Caco-2 (cell line): ENCODE measurements at regions of chr20 and their contacts with region 1.

Region 1: GRCh38 chr20:57654363-57654997 is 34.3 kb upstream of the ZBP1 start:
- DNase-seq: peak; percentile 71 to 79
- H3K4me3 ChIP-seq: no peak overlapping the region
- H3K4me3 Mint-ChIP-seq: no peak overlapping the region
- H3K27ac Mint-ChIP-seq: no peak overlapping the region
- H3K4me1 ChIP-seq: no peaks in the 10 kb centered on the region
- H3K4me1 Mint-ChIP-seq: no peaks in the 10 kb centered on the region
- H3K27me3 ChIP-seq: no peaks in the 10 kb centered on the region
- H3K27me3 Mint-ChIP-seq: peaks cover 3% of the 10 kb centered on the region
- CTCF ChIP-seq: peak; percentile 98 to 99

Region 2: GRCh38 chr20:56676001-56676400 is 978.5 kb before region 1 on chr20:
- CTCF ChIA-PET with region 1: no interaction called
- POLR2A ChIA-PET with region 1: no interaction called
- intact Hi-C with region 1: no loop called
- DNase-seq: no peak
- H3K4me3 ChIP-seq: no peak overlapping the region
- H3K4me3 Mint-ChIP-seq: no peak overlapping the region
- H3K27ac Mint-ChIP-seq: no peak overlapping the region
- H3K4me1 ChIP-seq: no peaks in the 10 kb centered on the region
- H3K4me1 Mint-ChIP-seq: peaks cover 5% of the 10 kb centered on the region
- H3K27me3 ChIP-seq: no peaks in the 10 kb centered on the region
- H3K27me3 Mint-ChIP-seq: no peaks in the 10 kb centered on the region
- CTCF ChIP-seq: no peak

Region 3: GRCh38 chr20:57622579-57623377 is 31.7 kb before region 1 on chr20:
- CTCF ChIA-PET with region 1: interaction called, 10 read pairs
- POLR2A ChIA-PET with region 1: no interaction called
- intact Hi-C with region 1: loop called (anchors 1 kb)
- DNase-seq: peak; percentile 81 to 87
- H3K4me3 ChIP-seq: no peak overlapping the region
- H3K4me3 Mint-ChIP-seq: no peak overlapping the region
- H3K27ac Mint-ChIP-seq: no peak overlapping the region
- H3K4me1 ChIP-seq: no peaks in the 10 kb centered on the region
- H3K4me1 Mint-ChIP-seq: no peaks in the 10 kb centered on the region
- H3K27me3 ChIP-seq: no peaks in the 10 kb centered on the region; the same call in 1 of the 2 replicates
- H3K27me3 Mint-ChIP-seq: peaks cover 15% of the 10 kb centered on the region
- CTCF ChIP-seq: peak; percentile 99

Region 4: GRCh38 chr20:57718490-57719271 is 64.2 kb after region 1 on chr20:
- CTCF ChIA-PET with region 1: interaction called, 3 read pairs
- POLR2A ChIA-PET with region 1: no interaction called
- intact Hi-C with region 1: loop called (anchors 1 kb)
- DNase-seq: peak; percentile 99 to 100
- H3K4me3 ChIP-seq: peak overlapping the region; percentile 40
- H3K4me3 Mint-ChIP-seq: peak overlapping the region; percentile 70
- H3K27ac Mint-ChIP-seq: peak overlapping the region; percentile 58
- H3K4me1 ChIP-seq: peaks cover 8% of the 10 kb centered on the region
- H3K4me1 Mint-ChIP-seq: no peaks in the 10 kb centered on the region
- H3K27me3 ChIP-seq: peaks cover 1% of the 10 kb centered on the region; the same call in 1 of the 2 replicates
- H3K27me3 Mint-ChIP-seq: peaks cover 15% of the 10 kb centered on the region
- CTCF ChIP-seq: no peak

Region 5: GRCh38 chr20:58087193-58087858 is 432.8 kb after region 1 on chr20:
- CTCF ChIA-PET with region 1: interaction called, 14 read pairs
- POLR2A ChIA-PET with region 1: no interaction called
- intact Hi-C with region 1: loop called (anchors 1 kb)
- DNase-seq: peak; percentile 47 to 64
- H3K4me3 ChIP-seq: no peak overlapping the region
- H3K4me3 Mint-ChIP-seq: no peak overlapping the region
- H3K27ac Mint-ChIP-seq: no peak overlapping the region
- H3K4me1 ChIP-seq: no peaks in the 10 kb centered on the region
- H3K4me1 Mint-ChIP-seq: no peaks in the 10 kb centered on the region
- H3K27me3 ChIP-seq: 0 out of 2 replicates have a peak, but pooled peaks cover 1% of the 10 kb centered on the region
- H3K27me3 Mint-ChIP-seq: peaks cover 25% of the 10 kb centered on the region
- CTCF ChIP-seq: peak; percentile 94 to 97

Region 6: GRCh38 chr20:58209652-58210397 is 555.3 kb after region 1 on chr20:
- CTCF ChIA-PET with region 1: interaction called, 9 read pairs
- POLR2A ChIA-PET with region 1: no interaction called
- intact Hi-C with region 1: loop called (anchors 1 kb)
- DNase-seq: peak; percentile 86 to 95
- H3K4me3 ChIP-seq: no peak overlapping the region
- H3K4me3 Mint-ChIP-seq: no peak overlapping the region
- H3K27ac Mint-ChIP-seq: no peak overlapping the region
- H3K4me1 ChIP-seq: no peaks in the 10 kb centered on the region
- H3K4me1 Mint-ChIP-seq: no peaks in the 10 kb centered on the region
- H3K27me3 ChIP-seq: peaks cover 2% of the 10 kb centered on the region
- H3K27me3 Mint-ChIP-seq: peaks cover 38% of the 10 kb centered on the region
- CTCF ChIP-seq: peak; percentile 100